OCI-LY7 (cell line): ENCODE measurements at regions of chr7 and their contacts with region 1.

Region 1: GRCh38 chr7:44082541-44083207 is 344 bp upstream of the POLM start:
- DNase-seq: peak; percentile 100
- H3K4me3 ChIP-seq: peak overlapping the region; percentile 68
- H3K27ac ChIP-seq: peak overlapping the region; percentile 54
- H3K4me1 ChIP-seq: peaks cover 57% of the 10 kb centered on the region
- CTCF ChIP-seq: no peak

Region 2: GRCh38 chr7:44059219-44060090 is 23.2 kb before region 1 on chr7:
- CTCF ChIA-PET with region 1: no interaction called
- POLR2A ChIA-PET with region 1: no interaction called
- intact Hi-C with region 1: no loop called
- DNase-seq: no peak
- H3K4me3 ChIP-seq: no peak overlapping the region
- H3K27ac ChIP-seq: peak overlapping the region; percentile 59
- H3K4me1 ChIP-seq: peaks cover 24% of the 10 kb centered on the region
- CTCF ChIP-seq: no peak

Region 3: DNA sequence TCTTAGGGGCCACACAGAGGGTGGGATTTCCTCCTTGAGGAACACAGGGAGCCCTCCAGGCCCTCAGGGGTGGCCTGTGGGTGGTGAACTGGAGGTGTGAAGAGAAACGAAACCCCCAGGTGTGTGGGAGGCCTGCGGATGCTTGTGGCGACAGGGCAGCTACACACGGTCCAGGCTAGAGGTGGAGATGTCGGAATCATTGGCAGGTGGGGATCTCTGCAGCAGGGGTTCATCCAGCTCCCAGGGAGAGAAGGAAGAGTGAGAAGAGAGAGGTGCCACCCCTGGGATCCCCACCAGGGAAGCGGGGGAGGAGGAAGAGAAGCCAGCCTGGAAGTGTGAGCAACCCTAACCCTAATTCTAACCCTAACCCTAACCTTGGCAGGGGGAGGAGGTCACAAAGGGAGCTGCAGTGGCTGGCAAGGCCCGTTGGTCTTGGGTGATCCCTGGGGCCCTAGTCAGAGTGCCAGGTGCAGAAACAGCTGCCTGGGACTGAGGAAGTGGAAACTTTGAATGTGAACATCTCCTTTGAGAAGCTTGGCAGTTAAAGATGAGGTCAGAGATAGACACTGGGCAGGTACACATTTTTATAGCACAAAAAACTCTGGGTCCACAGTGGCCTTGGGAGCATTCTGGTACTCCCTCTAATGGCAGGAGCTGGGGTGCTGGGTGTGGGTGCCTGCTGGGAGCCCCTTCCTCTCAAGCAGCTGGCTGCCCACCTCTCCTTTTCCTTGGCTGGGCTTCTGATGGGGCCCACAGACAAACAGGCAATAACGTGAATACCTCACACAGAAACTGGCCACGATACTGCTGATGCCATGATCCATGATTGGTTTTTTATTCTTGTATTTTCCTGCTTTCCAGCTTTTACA is 14.6 kb after region 1 on chr7:
- CTCF ChIA-PET with region 1: interaction called, 25 read pairs
- POLR2A ChIA-PET with region 1: interaction called, 38 read pairs
- intact Hi-C with region 1: loop called (anchors 1 kb)
- DNase-seq: peak; percentile 98
- H3K4me3 ChIP-seq: peak overlapping the region; percentile 35
- H3K27ac ChIP-seq: peak overlapping the region; percentile 98
- H3K4me1 ChIP-seq: peaks cover 100% of the 10 kb centered on the region
- CTCF ChIP-seq: peak; percentile 58

Region 4: DNA sequence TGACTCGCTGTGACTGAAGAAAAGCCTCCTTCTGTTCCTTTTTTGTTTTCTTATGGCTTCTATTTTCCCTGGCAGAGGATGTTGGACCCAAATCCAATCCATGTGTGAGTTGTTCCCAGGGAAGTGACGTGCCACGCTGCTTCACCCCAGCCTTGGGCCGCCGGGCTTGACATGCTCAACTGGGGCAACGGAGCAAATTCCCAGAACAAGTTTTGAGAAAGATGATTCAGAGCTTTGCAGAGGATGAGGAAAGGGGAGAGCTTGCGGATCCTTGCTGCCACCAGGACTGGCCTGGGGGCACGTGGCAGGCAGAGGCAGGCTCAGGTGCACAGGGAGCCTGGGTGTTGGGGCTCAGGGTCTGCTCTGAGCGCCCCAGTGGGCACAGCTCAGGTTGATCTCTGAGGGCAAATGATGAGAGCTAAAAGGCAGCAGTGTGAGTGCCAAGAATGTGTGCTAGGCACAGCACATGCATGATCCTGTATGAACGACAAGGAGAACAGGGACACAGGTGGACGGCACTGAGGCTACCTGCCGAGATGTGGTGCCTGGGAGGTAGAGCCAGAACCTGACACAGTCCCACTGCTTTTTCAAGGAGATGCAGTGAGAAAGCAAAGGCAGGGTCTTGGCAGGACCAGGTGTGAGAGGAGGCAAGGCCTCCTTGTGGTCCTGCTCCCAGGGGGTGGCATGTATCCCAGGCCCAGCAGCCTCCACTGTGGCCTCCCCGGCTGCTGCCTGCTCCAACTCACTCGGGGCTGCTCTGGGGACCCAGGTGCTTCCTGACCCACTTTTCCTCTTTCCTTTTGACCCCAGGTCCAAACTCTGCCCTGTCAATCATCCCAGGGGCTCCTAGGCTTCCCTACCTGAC is 19.9 kb after region 1 on chr7:
- CTCF ChIA-PET with region 1: interaction called, 25 read pairs
- POLR2A ChIA-PET with region 1: interaction called, 38 read pairs
- intact Hi-C with region 1: loop called (anchors 1 kb)
- DNase-seq: no peak
- H3K4me3 ChIP-seq: peak overlapping the region; percentile 53
- H3K27ac ChIP-seq: peak overlapping the region; percentile 98
- H3K4me1 ChIP-seq: peaks cover 85% of the 10 kb centered on the region
- CTCF ChIP-seq: no peak

Region 5: DNA sequence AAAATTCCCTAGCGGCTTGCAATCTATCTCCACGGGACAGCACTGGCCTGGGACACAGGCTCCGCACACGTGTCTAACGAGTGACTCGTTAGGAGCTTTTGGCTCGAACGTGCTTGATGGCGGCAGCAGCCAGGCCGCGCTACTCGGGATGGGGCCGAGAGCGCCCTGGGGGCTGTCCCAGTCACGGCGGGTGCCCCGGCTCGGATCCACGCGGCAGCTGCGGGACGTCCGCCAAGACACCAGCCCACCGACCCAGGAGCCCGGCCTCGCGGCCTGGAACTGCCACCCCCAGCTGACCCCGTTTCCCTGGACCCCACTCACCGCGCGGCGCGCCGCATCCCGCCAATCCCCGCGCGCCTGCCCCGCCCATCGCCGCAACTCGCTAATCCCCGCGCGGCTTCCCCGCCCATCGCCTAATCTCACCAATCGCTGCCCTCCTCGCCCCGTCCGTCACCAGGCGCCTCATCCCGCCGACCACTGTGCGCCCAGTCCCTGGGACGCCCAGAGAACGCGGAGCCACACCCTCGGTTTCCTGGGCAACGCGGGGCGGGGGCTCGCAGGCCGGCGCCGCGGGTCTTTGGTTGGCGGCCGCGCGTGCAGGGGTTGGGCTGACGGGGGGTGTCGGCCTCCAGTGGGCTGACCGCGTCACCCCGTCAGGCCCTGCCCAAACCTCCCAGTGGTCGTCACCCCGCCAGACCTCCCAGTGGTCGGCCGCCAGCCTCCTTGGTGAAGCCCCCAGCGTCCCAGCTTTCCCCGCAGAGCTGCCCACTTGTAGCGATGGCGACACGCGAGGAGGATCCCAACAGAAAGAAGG is 40.7 kb after region 1 on chr7 and contains the start of gene POLD2:
- CTCF ChIA-PET with region 1: no interaction called
- POLR2A ChIA-PET with region 1: interaction called, 5 read pairs
- intact Hi-C with region 1: loop called (anchors 1 kb)
- DNase-seq: peak; percentile 97
- H3K4me3 ChIP-seq: peak within 1 kb of the TSS; percentile 87
- H3K27ac ChIP-seq: peak within 1 kb of the TSS; percentile 43
- H3K4me1 ChIP-seq: peaks cover 41% of the 10 kb centered on the region
- CTCF ChIP-seq: no peak
- total RNA-seq, gene POLD2: 205 and 230 TPM in 2 replicates

Region 6: GRCh38 chr7:44128721-44129582 is 46.3 kb after region 1 on chr7:
- CTCF ChIA-PET with region 1: no interaction called
- POLR2A ChIA-PET with region 1: no interaction called
- intact Hi-C with region 1: loop called (anchors 1 kb)
- DNase-seq: no peak
- H3K4me3 ChIP-seq: no peak overlapping the region
- H3K27ac ChIP-seq: no peak overlapping the region
- H3K4me1 ChIP-seq: peaks cover 39% of the 10 kb centered on the region
- CTCF ChIP-seq: no peak; the same call in 1 of the 2 replicates